CD8-positive, alpha-beta memory T cell (primary cell): ENCODE measurements at regions of chr1 and their contacts with region 1.

Region 1: DNA sequence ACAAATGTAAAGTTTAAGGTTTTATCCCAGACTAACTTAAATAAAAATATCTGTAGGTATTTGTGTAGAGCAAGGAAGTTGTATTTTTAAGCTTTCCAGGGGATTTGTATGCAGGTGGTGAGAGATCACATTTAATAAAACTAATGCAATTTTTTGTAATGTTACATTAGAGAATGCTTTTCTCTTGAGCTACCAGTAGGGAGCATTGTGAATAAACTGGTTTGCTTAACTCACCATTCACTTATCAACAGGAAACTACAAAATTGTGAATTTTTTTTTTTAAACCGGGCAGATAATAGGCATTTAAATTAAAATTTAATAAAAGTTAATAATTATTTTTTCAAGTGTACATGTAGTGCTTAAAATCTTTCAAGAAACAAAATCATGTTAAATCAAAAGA is 78.6 kb downstream of the IVNS1ABP start:
- DNase-seq: peak in 2 of 5 donors; percentile 24 to 27
- H3K4me3 ChIP-seq: no peak overlapping the region
- H3K4me3 Mint-ChIP-seq: peak overlapping the region in 4 of 7 donors; percentile 23 to 35 (median 30)
- H3K27ac ChIP-seq: no peak overlapping the region
- H3K27ac Mint-ChIP-seq: peak overlapping the region in 3 of 8 donors; percentile 24 to 64 (median 43)
- H3K4me1 ChIP-seq: peaks cover 3% of the 10 kb centered on the region
- H3K4me1 Mint-ChIP-seq: peaks cover 29 to 36% (median 30%) of the 10 kb centered on the region in 3 donors
- H3K27me3 ChIP-seq: no peaks in the 10 kb centered on the region
- H3K27me3 Mint-ChIP-seq: no peaks in the 10 kb centered on the region

Region 2: GRCh38 chr1:185281245-185281644 is 42.8 kb after region 1 on chr1:
- CTCF ChIA-PET with region 1: interaction called, 11 read pairs
- POLR2A ChIA-PET with region 1: interaction called, 3 read pairs
- DNase-seq: peak in 3 of 5 donors; percentile 3 to 60 (median 59)
- H3K4me3 ChIP-seq: peak overlapping the region; percentile 29
- H3K4me3 Mint-ChIP-seq: peak overlapping the region in 6 of 7 donors; percentile 64 to 79 (median 71)
- H3K27ac ChIP-seq: no peak overlapping the region
- H3K27ac Mint-ChIP-seq: peak overlapping the region; percentile 86 to 100 (median 96)
- H3K4me1 ChIP-seq: peaks cover 56% of the 10 kb centered on the region
- H3K4me1 Mint-ChIP-seq: peaks cover 48 to 66% (median 66%) of the 10 kb centered on the region in 3 donors
- H3K27me3 ChIP-seq: no peaks in the 10 kb centered on the region
- H3K27me3 Mint-ChIP-seq: peaks cover 0 to 2% of the 10 kb centered on the region in 2 donors

Region 3: GRCh38 chr1:185595835-185596667 is 357.6 kb after region 1 on chr1:
- CTCF ChIA-PET with region 1: interaction called, 16 read pairs
- POLR2A ChIA-PET with region 1: no interaction called
- DNase-seq: peak; percentile 24 to 72 (median 47)
- H3K4me3 ChIP-seq: no peak overlapping the region
- H3K4me3 Mint-ChIP-seq: no peak overlapping the region
- H3K27ac ChIP-seq: no peak overlapping the region
- H3K27ac Mint-ChIP-seq: peak overlapping the region in 6 of 8 donors; percentile 36 to 70 (median 54)
- H3K4me1 ChIP-seq: peaks cover 13% of the 10 kb centered on the region
- H3K4me1 Mint-ChIP-seq: peaks cover 19 to 34% (median 32%) of the 10 kb centered on the region in 3 donors
- H3K27me3 ChIP-seq: no peaks in the 10 kb centered on the region
- H3K27me3 Mint-ChIP-seq: no peaks in the 10 kb centered on the region

Region 4: DNA sequence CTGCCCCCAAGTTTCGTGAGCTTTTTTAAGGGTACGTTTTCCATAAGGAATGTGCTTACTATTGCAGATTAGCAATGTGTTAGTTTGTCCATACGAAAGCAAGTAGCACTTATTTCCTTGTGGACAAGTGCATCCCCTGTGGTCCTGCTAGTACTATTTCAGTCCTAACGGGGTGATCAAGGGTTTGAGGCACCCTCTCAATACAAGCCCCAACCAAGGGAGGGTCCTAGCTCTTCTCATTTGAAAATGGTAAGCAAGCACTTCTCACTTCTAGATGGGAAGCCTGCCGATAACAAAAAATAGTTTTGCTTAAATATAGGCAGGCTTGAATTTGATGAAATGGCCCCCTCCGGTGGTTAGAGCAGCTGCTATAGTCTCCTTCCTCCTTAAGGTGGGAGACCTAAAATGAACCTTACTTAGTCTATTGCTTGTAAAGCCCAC is 431.8 kb after region 1 on chr1:
- CTCF ChIA-PET with region 1: interaction called, 23 read pairs
- POLR2A ChIA-PET with region 1: no interaction called
- DNase-seq: peak; percentile 19 to 68 (median 41)
- H3K4me3 ChIP-seq: no peak overlapping the region
- H3K4me3 Mint-ChIP-seq: no peak overlapping the region
- H3K27ac ChIP-seq: no peak overlapping the region
- H3K27ac Mint-ChIP-seq: peak overlapping the region in 2 of 8 donors; percentile 12 to 28
- H3K4me1 ChIP-seq: peaks cover 13% of the 10 kb centered on the region
- H3K4me1 Mint-ChIP-seq: peaks cover 19 to 31% (median 23%) of the 10 kb centered on the region in 3 donors
- H3K27me3 ChIP-seq: no peaks in the 10 kb centered on the region
- H3K27me3 Mint-ChIP-seq: no peaks in the 10 kb centered on the region

Region 5: DNA sequence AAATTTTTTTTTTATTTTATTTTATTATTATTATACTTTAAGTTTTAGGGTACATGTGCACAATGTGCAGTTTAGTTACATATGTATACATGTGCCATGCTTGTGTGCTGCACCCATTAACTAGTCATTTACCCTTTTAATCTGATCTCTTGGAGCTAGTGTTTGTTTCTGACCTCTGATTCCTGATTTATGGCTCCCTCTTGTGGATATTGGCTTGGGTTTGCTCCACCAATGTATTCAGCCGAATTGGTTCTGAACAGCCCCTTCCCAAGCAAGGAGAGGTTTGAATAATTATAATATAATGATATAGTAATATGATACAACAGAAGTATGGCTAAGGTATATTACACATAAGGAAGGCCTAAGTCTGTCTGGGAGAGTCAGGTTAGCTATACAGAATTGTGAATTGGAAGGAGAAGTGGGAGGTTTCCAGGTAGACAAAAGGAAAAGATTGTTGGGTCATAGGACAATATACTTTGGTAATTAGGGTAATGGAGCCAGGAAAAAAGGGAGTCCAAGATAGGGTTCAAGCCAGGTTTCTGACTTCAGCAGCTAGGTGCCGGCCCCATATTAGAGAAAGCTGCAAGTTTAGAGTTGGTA is 442.7 kb after region 1 on chr1:
- CTCF ChIA-PET with region 1: interaction called, 13 read pairs
- POLR2A ChIA-PET with region 1: no interaction called
- DNase-seq: peak in 2 of 5 donors; percentile 17 to 33
- H3K4me3 ChIP-seq: no peak overlapping the region
- H3K4me3 Mint-ChIP-seq: no peak overlapping the region
- H3K27ac ChIP-seq: no peak overlapping the region
- H3K27ac Mint-ChIP-seq: no peak overlapping the region
- H3K4me1 ChIP-seq: peaks cover 15% of the 10 kb centered on the region
- H3K4me1 Mint-ChIP-seq: peaks cover 17 to 24% (median 22%) of the 10 kb centered on the region in 3 donors
- H3K27me3 ChIP-seq: no peaks in the 10 kb centered on the region
- H3K27me3 Mint-ChIP-seq: peaks cover 2 to 3% of the 10 kb centered on the region in 2 donors